Esophagus squamous epithelium (tissue), 5 donors: ENCODE measurements at regions of chr5 and their contacts with region 1.

Region 1: DNA sequence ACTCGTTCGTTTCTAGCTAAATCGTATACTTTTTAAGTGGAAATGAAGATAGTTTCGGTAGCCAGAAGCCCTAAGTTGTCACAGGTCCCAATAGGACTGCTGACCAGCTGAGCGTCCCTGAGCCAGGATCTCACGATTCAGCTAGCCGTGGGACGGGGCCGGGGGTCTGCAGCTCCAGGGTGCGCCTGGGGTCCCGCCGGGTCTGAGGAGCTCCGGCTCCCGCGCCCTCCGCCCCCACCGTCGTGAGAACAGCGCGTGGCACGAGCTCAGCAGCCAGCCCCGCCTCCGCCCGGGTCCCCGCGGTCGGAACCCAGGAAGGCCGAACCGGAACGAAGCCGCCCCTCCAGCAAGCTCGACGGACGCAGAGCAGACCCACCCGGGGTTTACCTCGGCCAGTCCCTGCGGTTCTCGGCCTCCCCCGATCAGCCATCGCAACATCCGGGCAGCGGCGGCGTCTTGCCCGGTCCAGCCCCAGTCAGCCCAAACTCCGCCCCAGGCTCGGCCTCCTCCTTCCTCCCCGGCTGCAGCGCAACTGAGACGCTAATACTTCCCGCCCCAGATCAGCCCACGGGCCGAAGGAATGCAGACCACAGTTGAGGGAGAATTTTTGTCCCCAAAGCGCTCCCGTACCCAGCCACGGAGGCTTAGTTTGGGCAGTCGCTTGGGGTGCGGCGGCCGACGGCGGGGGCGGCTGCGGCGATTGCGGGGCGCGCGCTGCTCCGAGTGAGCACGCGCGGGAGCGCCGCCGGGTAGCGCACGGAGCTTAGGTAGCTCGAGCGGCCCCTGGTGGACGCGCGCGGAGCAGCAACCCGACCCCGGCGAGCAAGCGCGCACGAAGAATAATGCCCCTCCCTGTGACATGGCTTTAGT is at the start of gene WDR41:
- DNase-seq: peak; percentile 57
- H3K4me3 ChIP-seq: peak within 1 kb of the TSS; percentile 67 to 90 (median 79)
- H3K27ac ChIP-seq: peak within 1 kb of the TSS; percentile 94 to 99 (median 97)
- H3K4me1 ChIP-seq: peaks cover 4 to 36% (median 8%) of the 10 kb centered on the region in 3 donors
- H3K27me3 ChIP-seq: peaks cover 0 to 2% (median 0%) of the 10 kb centered on the region in 4 donors
- CTCF ChIP-seq: peak; percentile 90 to 97 (median 96)
- POLR2A ChIP-seq: peak in 2 of 4 donors; percentile 55 to 64
- total RNA-seq, gene WDR41: 17.4 to 58.6 (median 38.9) TPM

Region 2: GRCh38 chr5:77143998-77144836 is 347.8 kb before region 1 on chr5:
- intact Hi-C with region 1: loop called (anchors 10 kb)
- DNase-seq: no peak
- H3K4me3 ChIP-seq: no peak overlapping the region
- H3K27ac ChIP-seq: no peak overlapping the region
- H3K4me1 ChIP-seq: peaks cover 0 to 16% (median 0%) of the 10 kb centered on the region in 3 donors
- H3K27me3 ChIP-seq: peaks cover 0 to 5% (median 0%) of the 10 kb centered on the region in 4 donors
- CTCF ChIP-seq: peak; percentile 60 to 75 (median 66)
- POLR2A ChIP-seq: no peak

Region 3: DNA sequence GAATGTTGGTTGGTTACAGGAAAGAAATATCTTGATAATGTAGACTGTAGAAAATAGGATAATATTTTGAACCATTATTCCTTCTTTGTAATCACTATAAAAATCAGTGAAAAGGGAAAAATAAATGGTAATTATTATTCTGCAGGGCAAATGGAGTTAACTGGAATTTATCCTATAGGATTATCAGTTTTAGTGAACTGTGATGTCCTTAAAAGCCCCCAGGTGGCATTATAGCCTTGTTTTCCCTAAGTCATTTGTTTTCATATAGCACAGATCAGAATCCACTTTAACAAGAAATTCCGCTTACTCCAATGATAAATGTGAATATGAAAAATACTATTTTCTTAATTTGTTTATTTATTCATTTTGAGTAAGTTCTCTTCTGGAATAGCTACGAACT is 26.3 kb after region 1 on chr5:
- intact Hi-C with region 1: no loop called
- DNase-seq: no peak
- H3K4me3 ChIP-seq: no peak overlapping the region
- H3K27ac ChIP-seq: no peak overlapping the region
- H3K4me1 ChIP-seq: no peaks in the 10 kb centered on the region
- H3K27me3 ChIP-seq: peaks cover 0 to 10% (median 0%) of the 10 kb centered on the region in 4 donors
- CTCF ChIP-seq: peak in 2 of 6 experiments; percentile 7 to 10
- POLR2A ChIP-seq: no peak